ENCODE measurements at regions of chr17 and their contacts with region 1.

Region 1: GRCh38 chr17:17681187-17681848 is at the start of gene RAI1:
- DNase-seq: peak; percentile 82 to 90
- ATAC-seq: peak; percentile 63 to 86 (median 72)
- H3K4me3 ChIP-seq: peak within 1 kb of the TSS; percentile 77
- H3K4me3 Mint-ChIP-seq: peak within 1 kb of the TSS; percentile 93
- H3K27ac ChIP-seq: peak within 1 kb of the TSS; percentile 98
- H3K27ac Mint-ChIP-seq: peak within 1 kb of the TSS; percentile 91 to 96
- H3K4me1 ChIP-seq: peaks cover 34% of the 10 kb centered on the region
- H3K4me1 Mint-ChIP-seq: peaks cover 32 to 34% of the 10 kb centered on the region in 2 donors
- H3K27me3 ChIP-seq: no peaks in the 10 kb centered on the region
- H3K27me3 Mint-ChIP-seq: peaks cover 0 to 3% of the 10 kb centered on the region in 2 donors
- CTCF ChIP-seq: peak; percentile 62
- total RNA-seq, gene RAI1: 39.8 to 55.0 (median 49.4) TPM

Region 2: DNA sequence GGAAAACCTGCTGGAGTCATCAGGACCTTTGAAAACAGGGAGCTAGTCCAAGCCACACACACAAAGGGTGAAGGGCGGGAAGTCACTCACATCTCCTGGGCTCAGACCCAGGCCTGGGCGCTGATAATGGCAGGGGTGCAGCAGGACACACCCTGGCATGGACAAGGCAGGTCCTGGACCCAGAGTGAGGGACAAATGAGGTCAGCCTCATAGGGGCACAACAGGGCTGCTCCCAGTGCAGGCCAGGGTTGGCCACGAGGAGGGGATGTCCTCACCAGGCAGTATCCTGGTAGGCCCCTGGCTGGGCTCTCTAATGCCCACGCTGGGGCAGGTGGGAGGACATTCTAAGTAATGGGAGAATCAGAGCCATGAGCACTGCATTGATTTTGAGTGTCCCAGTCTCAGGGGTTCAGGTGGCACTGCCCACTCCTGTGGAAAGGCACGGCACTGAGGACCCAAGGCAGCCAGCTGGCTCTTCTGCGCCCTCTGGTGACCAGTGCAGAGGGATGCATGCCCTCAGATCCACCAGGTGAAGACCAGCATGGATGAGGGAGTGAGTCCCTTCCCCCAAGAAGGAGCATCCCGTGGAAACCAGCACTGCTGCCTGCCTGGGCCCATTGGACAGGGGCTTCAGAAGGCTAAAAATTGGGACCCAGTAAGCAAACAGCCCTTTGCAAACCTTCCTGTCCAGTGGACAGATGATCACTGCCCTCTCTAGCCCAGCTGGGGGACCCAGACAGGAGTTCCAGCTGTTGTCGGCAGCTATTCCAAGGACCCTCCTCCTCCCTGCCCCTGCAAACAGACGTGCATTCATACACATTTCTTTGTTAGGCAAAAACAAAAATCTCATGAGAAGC is 178.8 kb after region 1 on chr17:
- intact Hi-C with region 1: loop called (anchors 1 kb)
- DNase-seq: peak; percentile 72 to 88
- ATAC-seq: peak; percentile 90 to 99 (median 99)
- H3K4me3 ChIP-seq: no peak overlapping the region
- H3K4me3 Mint-ChIP-seq: no peak overlapping the region
- H3K27ac ChIP-seq: no peak overlapping the region
- H3K27ac Mint-ChIP-seq: no peak overlapping the region
- H3K4me1 ChIP-seq: peaks cover 15% of the 10 kb centered on the region
- H3K4me1 Mint-ChIP-seq: peaks cover 0 to 6% of the 10 kb centered on the region in 2 donors
- H3K27me3 ChIP-seq: no peaks in the 10 kb centered on the region
- H3K27me3 Mint-ChIP-seq: no peaks in the 10 kb centered on the region
- CTCF ChIP-seq: peak; percentile 98

Region 3: DNA sequence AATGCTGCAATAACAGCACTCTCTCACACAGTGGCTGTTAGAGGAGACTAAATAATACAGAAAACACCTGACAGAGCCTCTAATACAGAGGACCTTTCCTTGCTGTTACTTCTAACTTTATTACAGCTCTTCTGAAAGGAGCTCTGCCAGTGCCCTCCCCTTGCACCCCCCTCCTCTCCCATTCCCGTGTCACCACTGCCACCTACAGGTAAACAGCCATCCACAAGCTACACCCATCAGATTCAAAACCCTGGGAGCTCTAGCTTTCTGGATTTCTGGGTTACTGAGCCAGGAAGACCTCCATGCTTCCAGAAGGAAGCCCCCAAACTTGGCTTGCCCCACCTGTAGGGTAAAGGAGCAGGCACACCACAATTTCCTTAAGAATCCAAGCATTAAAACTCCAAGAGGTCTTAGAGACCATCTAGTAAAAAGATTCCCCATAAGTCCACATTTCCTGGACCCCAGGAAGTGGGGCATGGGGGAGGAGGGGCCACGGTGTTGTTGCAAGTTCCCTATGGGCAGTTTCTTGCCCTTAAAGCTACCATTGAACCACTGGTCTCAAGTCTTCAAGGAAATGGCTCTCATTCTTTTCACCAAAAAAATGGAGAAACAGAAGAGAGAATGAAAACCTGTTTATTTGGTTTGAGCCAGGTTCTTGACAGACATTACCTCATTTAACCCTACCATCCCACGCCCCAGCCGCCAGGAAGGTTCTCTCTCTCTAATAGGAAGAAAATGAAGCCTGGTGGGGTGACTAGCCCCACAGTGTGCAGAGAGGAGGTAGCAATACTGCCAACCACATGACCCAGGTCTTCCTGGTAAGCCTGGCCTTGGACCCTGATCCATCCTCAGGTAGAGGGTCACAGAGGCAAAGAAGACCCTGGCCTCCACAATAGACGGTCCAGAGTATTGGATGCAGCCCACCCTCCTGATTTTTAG is 238.1 kb after region 1 on chr17:
- intact Hi-C with region 1: loop called (anchors 1 kb)
- DNase-seq: peak; percentile 26 to 81
- ATAC-seq: peak; percentile 70 to 86 (median 72)
- H3K4me3 ChIP-seq: no peak overlapping the region
- H3K4me3 Mint-ChIP-seq: no peak overlapping the region
- H3K27ac ChIP-seq: no peak overlapping the region
- H3K27ac Mint-ChIP-seq: no peak overlapping the region
- H3K4me1 ChIP-seq: no peaks in the 10 kb centered on the region
- H3K4me1 Mint-ChIP-seq: peaks cover 24 to 29% of the 10 kb centered on the region in 2 donors
- H3K27me3 ChIP-seq: no peaks in the 10 kb centered on the region
- H3K27me3 Mint-ChIP-seq: no peaks in the 10 kb centered on the region
- CTCF ChIP-seq: peak; percentile 54

Region 4: GRCh38 chr17:17972126-17972951 is 291.0 kb after region 1 on chr17 and contains the starts of genes DRC3 and TOM1L2:
- intact Hi-C with region 1: loop called (anchors 5 kb)
- DNase-seq: peak; percentile 99
- ATAC-seq: peak; percentile 87 to 96 (median 88)
- H3K4me3 ChIP-seq: peak within 1 kb of the TSS; percentile 72
- H3K4me3 Mint-ChIP-seq: peak within 1 kb of the TSS; percentile 99
- H3K27ac ChIP-seq: peak within 1 kb of the TSS; percentile 81
- H3K27ac Mint-ChIP-seq: peak within 1 kb of the TSS; percentile 95 to 96
- H3K4me1 ChIP-seq: peaks cover 13% of the 10 kb centered on the region
- H3K4me1 Mint-ChIP-seq: peaks cover 26 to 33% of the 10 kb centered on the region in 2 donors
- H3K27me3 ChIP-seq: no peaks in the 10 kb centered on the region
- H3K27me3 Mint-ChIP-seq: no peaks in the 10 kb centered on the region
- CTCF ChIP-seq: no peak
- total RNA-seq, gene DRC3: 0.26 to 0.78 TPM in 2 of 3 donors, not detected in the other
- total RNA-seq, gene TOM1L2: 35.7 to 43.2 (median 35.7) TPM

Region 5: GRCh38 chr17:18038861-18039534 is 357.7 kb after region 1 on chr17 and contains the starts of genes ATPAF2 and GID4:
- intact Hi-C with region 1: loop called (anchors 5 kb)
- DNase-seq: peak; percentile 99
- ATAC-seq: peak; percentile 91 to 99 (median 94)
- H3K4me3 ChIP-seq: peak within 1 kb of the TSS; percentile 89
- H3K4me3 Mint-ChIP-seq: peak within 1 kb of the TSS; percentile 93
- H3K27ac ChIP-seq: peak within 1 kb of the TSS; percentile 75
- H3K27ac Mint-ChIP-seq: peak within 1 kb of the TSS; percentile 79 to 87
- H3K4me1 ChIP-seq: peaks cover 28% of the 10 kb centered on the region
- H3K4me1 Mint-ChIP-seq: peaks cover 45 to 52% of the 10 kb centered on the region in 2 donors
- H3K27me3 ChIP-seq: no peaks in the 10 kb centered on the region
- H3K27me3 Mint-ChIP-seq: no peaks in the 10 kb centered on the region
- CTCF ChIP-seq: no peak
- total RNA-seq, gene ATPAF2: 31.4 to 43.4 (median 41.5) TPM
- total RNA-seq, gene GID4: 6.6 to 10.0 (median 6.9) TPM